Endothelial cell of umbilical vein (primary cell): ENCODE measurements at regions of chr2 and their contacts with region 1.

Region 1: GRCh38 chr2:127415593-127416505 is 2.4 kb upstream of the PROC start:
- DNase-seq: peak; percentile 58
- H3K4me3 ChIP-seq: peak overlapping the region in 2 of 3 experiments; percentile 26 to 31
- H3K27ac ChIP-seq: no peak overlapping the region
- H3K4me1 ChIP-seq: peaks cover 35% of the 10 kb centered on the region
- H3K27me3 ChIP-seq: peaks cover 0 to 2% of the 10 kb centered on the region in 2 experiments
- CTCF ChIP-seq: peak; percentile 57 to 84
- POLR2A ChIP-seq: no peak

Region 2: GRCh38 chr2:126507425-126507911 is 908.4 kb before region 1 on chr2:
- CTCF ChIA-PET with region 1: no interaction called
- POLR2A ChIA-PET with region 1: no interaction called
- dilution Hi-C with region 1: no loop called
- intact Hi-C with region 1: no loop called
- DNase-seq: no peak
- H3K4me3 ChIP-seq: no peak overlapping the region
- H3K27ac ChIP-seq: no peak overlapping the region
- H3K4me1 ChIP-seq: no peaks in the 10 kb centered on the region
- H3K27me3 ChIP-seq: no peaks in the 10 kb centered on the region
- CTCF ChIP-seq: no peak
- POLR2A ChIP-seq: no peak

Region 3: GRCh38 chr2:127293748-127294562 is 121.9 kb before region 1 on chr2 and contains the start of gene ERCC3:
- CTCF ChIA-PET with region 1: no interaction called
- POLR2A ChIA-PET with region 1: no interaction called
- dilution Hi-C with region 1: no loop called
- intact Hi-C with region 1: no loop called
- DNase-seq: peak; percentile 81
- H3K4me3 ChIP-seq: peak within 1 kb of the TSS; percentile 54 to 90 (median 82)
- H3K27ac ChIP-seq: peak within 1 kb of the TSS; percentile 31
- H3K4me1 ChIP-seq: peaks cover 12% of the 10 kb centered on the region
- H3K27me3 ChIP-seq: no peaks in the 10 kb centered on the region
- CTCF ChIP-seq: no peak
- POLR2A ChIP-seq: peak; percentile 90
- total RNA-seq, gene ERCC3: 46.6 and 47.3 TPM in 2 replicates

Region 4: GRCh38 chr2:127324635-127325034 is 91.2 kb before region 1 on chr2:
- CTCF ChIA-PET with region 1: interaction called, 10 read pairs
- POLR2A ChIA-PET with region 1: no interaction called
- dilution Hi-C with region 1: no loop called
- intact Hi-C with region 1: no loop called
- DNase-seq: peak; percentile 66
- H3K4me3 ChIP-seq: no peak overlapping the region
- H3K27ac ChIP-seq: no peak overlapping the region
- H3K4me1 ChIP-seq: no peaks in the 10 kb centered on the region
- H3K27me3 ChIP-seq: no peaks in the 10 kb centered on the region
- CTCF ChIP-seq: peak; percentile 38 to 48
- POLR2A ChIP-seq: no peak

Region 5: DNA sequence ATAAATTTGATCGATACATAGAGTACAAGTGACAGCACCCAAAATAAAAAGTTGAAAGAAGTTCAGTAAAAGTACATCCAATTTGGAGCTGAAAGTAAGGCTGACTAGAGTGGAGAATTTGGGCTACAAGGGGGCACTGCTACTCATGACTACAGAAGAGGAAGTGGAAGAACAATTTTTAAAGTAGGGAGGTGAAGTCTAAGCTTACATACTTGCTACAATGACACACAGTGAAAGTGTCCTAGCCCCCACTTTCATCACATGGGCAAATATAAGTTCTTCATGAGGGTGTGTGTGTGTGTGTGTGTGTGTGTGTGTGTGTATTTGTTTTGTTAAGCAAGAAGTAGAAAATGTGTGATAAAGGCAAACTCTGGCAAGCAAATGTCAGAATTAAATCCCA is 73.7 kb before region 1 on chr2:
- CTCF ChIA-PET with region 1: no interaction called
- POLR2A ChIA-PET with region 1: no interaction called
- dilution Hi-C with region 1: no loop called
- intact Hi-C with region 1: loop called (anchors 5 kb)
- DNase-seq: no peak
- H3K4me3 ChIP-seq: no peak overlapping the region
- H3K27ac ChIP-seq: no peak overlapping the region
- H3K4me1 ChIP-seq: no peaks in the 10 kb centered on the region
- H3K27me3 ChIP-seq: no peaks in the 10 kb centered on the region
- CTCF ChIP-seq: no peak
- POLR2A ChIP-seq: no peak

Region 6: DNA sequence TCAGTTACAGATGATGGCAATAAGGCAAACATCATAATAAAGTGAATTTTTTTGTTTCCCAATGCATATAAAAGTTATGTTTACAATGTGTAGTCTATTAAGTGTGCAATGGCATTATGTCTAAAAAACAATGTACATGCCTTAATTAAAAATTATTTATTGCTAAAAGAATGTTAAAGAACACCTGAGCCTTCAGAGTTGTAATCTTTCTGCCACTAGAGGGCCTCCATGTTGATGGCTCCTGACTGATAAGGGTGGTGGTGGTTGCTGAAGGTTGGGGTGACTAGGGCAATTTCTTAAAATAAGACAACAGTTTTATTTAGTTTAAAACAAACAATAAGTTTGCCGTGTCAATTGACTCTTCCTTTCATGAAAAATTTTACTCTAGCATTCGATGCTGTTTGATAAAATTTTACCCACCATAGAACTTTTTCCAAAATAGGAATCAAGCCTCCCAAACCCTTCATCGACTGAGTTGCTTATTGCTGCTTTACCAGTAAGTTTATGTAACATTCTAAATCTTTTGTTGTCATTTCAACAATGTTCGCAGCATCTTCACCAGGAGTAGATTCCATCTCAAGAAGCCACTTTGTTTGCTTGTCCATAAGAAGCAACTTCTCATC is 60.4 kb before region 1 on chr2:
- CTCF ChIA-PET with region 1: interaction called, 5 read pairs
- POLR2A ChIA-PET with region 1: no interaction called
- dilution Hi-C with region 1: no loop called
- intact Hi-C with region 1: loop called (anchors 1 kb)
- DNase-seq: peak; percentile 25
- H3K4me3 ChIP-seq: no peak overlapping the region
- H3K27ac ChIP-seq: no peak overlapping the region
- H3K4me1 ChIP-seq: no peaks in the 10 kb centered on the region
- H3K27me3 ChIP-seq: no peaks in the 10 kb centered on the region
- CTCF ChIP-seq: peak; percentile 49 to 51
- POLR2A ChIP-seq: no peak

Region 7: DNA sequence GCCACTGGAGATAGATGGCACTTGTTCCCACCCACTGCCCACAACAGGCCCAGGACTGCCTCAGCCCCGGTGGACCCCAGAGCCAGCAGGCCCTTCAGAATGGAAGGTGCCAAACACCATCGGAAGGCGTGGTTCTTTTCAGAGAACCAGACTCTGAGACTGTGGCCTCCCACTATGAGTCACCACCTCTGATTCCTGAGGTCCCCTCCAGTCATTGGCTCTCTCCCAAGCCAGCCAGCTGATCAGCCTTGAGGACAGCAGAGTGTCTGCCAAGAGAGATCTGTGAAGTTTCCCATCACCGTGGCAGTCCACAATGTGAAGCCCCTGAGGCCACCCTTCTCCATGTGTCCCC is 17.6 kb before region 1 on chr2:
- CTCF ChIA-PET with region 1: interaction called, 14 read pairs
- POLR2A ChIA-PET with region 1: no interaction called
- dilution Hi-C with region 1: no loop called
- intact Hi-C with region 1: no loop called
- DNase-seq: peak; percentile 91
- H3K4me3 ChIP-seq: no peak overlapping the region
- H3K27ac ChIP-seq: no peak overlapping the region
- H3K4me1 ChIP-seq: peaks cover 13% of the 10 kb centered on the region
- H3K27me3 ChIP-seq: no peaks in the 10 kb centered on the region
- CTCF ChIP-seq: no peak
- POLR2A ChIP-seq: no peak

Region 8: GRCh38 chr2:127428057-127428814 is 12.4 kb after region 1 on chr2:
- CTCF ChIA-PET with region 1: interaction called, 15 read pairs
- POLR2A ChIA-PET with region 1: interaction called, 5 read pairs
- dilution Hi-C with region 1: no loop called
- intact Hi-C with region 1: no loop called
- DNase-seq: no peak
- H3K4me3 ChIP-seq: no peak overlapping the region
- H3K27ac ChIP-seq: no peak overlapping the region
- H3K4me1 ChIP-seq: peaks cover 4% of the 10 kb centered on the region
- H3K27me3 ChIP-seq: peaks cover 0 to 4% of the 10 kb centered on the region in 2 experiments
- CTCF ChIP-seq: no peak
- POLR2A ChIP-seq: no peak